ENCODE measurements at regions of chr7 and their contacts with region 1.

Region 1: DNA sequence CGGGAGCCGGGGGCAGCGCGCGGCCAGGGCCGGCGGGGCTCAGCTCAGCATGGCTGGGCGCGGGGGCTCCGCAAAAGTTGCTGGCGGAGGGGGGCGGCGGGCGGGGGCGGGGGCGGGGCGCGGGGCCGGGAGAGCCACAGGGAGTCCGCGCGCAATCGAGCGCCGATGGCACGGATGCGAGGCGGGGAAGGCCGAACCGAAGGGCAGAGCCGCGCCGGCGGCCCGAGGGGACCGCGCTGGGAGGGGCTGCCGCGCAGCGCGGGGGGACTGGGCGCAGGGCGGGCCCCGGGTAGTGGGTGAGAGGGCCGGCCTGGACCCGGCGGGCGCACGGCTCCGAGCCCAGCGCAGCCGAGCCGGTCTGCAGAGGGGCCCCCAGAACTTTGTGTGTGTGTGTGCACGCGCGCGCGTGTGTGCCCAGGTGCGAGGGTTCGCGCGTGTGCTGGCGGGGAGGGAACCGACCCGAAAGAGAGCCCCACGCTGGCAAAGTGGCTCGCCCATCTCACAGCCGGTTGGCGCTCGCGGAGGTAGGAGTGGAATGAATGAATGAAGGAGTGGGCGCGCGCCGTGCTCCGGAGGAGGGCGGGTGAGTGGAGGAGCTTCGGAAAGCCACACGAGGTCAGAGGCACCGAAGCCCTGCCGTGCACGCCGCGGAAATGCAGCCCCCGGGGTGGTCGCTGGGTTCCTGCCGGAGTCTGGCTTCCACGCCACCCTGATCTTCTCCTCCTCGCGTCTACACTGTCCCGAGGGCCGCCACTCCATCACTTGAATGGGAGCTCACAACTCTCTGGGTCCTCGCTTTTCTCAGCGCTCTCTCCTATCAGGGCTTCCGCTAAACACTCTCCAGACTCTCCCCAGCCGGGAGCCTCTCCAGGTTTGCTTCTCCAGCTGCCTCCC is at the start of gene HIPK2:
- DNase-seq: peak; percentile 71
- ATAC-seq: peak; percentile 81
- H3K4me3 Mint-ChIP-seq: peak within 1 kb of the TSS; percentile 99
- H3K27ac Mint-ChIP-seq: peak within 1 kb of the TSS; percentile 94
- H3K4me1 Mint-ChIP-seq: peaks cover 39% of the 10 kb centered on the region
- H3K27me3 Mint-ChIP-seq: peaks cover 3% of the 10 kb centered on the region
- CTCF ChIP-seq: no peak
- total RNA-seq, gene HIPK2: 21.1 and 23.0 TPM in 2 replicates

Region 2: DNA sequence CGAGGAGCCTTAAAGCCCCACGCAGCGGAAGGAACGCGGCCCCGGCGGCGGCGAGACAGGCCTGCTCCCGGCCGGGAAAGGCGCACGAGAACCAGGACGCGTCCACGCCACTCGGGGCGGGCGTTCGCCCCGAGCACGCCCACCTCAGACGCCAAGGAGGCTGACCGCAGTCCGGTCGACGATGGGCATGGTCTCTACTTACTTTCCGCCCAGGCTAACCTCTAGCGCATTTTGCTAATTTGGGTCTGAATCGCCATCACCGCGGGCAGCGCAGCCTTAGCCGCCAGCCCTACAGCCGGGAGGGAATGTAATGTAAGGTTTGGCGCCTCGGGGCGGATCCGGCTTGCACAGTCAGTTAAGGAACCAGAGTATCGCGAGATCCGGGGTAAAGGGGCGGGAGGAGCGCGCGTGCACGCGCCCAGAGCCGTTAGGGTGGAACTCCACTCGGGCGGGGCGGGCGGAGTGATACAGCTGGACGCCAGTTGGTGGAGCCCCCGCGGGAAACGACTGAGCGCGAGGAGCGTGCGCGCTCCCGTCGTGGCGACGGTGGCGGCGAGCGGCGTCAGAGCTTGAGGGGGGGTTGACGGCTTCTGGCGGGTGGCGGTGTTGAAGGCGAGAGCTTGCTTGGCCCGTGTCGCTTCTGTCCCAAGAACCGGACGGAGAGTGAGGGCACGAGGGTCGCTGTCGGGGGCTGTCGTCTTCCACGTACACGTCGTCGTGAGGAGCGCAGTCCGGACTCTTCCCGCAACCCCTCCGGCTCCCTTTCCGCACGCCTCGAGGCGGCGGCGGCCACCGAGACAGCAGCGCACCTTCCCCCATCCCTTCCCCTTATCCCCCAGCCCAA is 418.6 kb before region 1 on chr7 and contains the start of gene LUC7L2:
- CTCF ChIA-PET with region 1: no interaction called
- POLR2A ChIA-PET with region 1: no interaction called
- intact Hi-C with region 1: loop called (anchors 5 kb)
- DNase-seq: peak; percentile 97
- ATAC-seq: peak; percentile 78
- H3K4me3 Mint-ChIP-seq: peak within 1 kb of the TSS; percentile 98
- H3K27ac Mint-ChIP-seq: peak within 1 kb of the TSS; percentile 100
- H3K4me1 Mint-ChIP-seq: peaks cover 41% of the 10 kb centered on the region
- H3K27me3 Mint-ChIP-seq: no peaks in the 10 kb centered on the region
- CTCF ChIP-seq: no peak
- total RNA-seq, gene LUC7L2: 94.0 and 118 TPM in 2 replicates

Region 3: GRCh38 chr7:139811066-139811465 is 32.9 kb after region 1 on chr7:
- CTCF ChIA-PET with region 1: no interaction called
- POLR2A ChIA-PET with region 1: no interaction called
- intact Hi-C with region 1: no loop called
- DNase-seq: no peak
- ATAC-seq: no peak
- H3K4me3 Mint-ChIP-seq: no peak overlapping the region
- H3K27ac Mint-ChIP-seq: no peak overlapping the region
- H3K4me1 Mint-ChIP-seq: no peaks in the 10 kb centered on the region
- H3K27me3 Mint-ChIP-seq: peaks cover 7% of the 10 kb centered on the region
- CTCF ChIP-seq: no peak

Region 4: DNA sequence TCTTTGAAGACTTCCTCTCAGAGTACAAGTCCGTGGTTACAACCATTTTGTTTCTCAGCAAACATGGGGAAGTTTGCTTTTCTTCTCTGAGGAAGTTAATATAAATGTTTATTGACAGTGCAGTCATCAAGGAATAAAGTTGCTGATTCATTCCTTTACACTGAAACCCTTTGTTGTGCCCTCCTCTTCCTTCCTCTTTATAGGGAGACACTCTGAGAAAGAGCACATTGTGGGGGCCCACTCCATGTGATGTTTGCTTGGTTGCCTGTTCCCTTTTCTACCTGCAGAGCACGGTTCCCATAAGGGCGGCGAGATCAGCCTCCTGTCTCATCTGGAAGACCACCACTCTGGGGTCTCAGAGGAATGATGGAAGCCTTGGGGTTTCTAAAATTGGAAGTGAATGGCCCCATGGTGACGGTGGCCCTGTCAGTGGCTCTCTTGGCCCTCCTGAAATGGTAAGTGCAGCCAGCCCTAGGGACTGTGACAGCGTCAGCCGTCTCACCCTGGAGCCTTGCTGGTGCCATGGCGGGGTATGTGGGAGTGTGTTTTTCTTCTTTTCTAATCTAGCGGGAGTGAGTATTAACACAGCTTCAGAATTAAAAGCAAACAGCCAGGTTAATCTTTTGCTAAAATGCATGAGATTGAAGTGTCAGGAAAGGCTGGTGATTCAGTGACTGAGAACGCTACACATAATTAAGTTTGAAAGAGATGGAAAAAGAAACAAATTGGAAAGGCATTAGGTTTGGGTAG is 51.0 kb after region 1 on chr7 and contains the start of gene TBXAS1:
- CTCF ChIA-PET with region 1: no interaction called
- POLR2A ChIA-PET with region 1: interaction called, 4 read pairs
- intact Hi-C with region 1: loop called (anchors 2 kb)
- DNase-seq: no peak
- ATAC-seq: peak; percentile 73
- H3K4me3 Mint-ChIP-seq: peak within 1 kb of the TSS; percentile 74
- H3K27ac Mint-ChIP-seq: peak within 1 kb of the TSS; percentile 76
- H3K4me1 Mint-ChIP-seq: peaks cover 34% of the 10 kb centered on the region
- H3K27me3 Mint-ChIP-seq: no peaks in the 10 kb centered on the region
- CTCF ChIP-seq: no peak
- total RNA-seq, gene TBXAS1: 2.0 and 3.8 TPM in 2 replicates

Region 5: DNA sequence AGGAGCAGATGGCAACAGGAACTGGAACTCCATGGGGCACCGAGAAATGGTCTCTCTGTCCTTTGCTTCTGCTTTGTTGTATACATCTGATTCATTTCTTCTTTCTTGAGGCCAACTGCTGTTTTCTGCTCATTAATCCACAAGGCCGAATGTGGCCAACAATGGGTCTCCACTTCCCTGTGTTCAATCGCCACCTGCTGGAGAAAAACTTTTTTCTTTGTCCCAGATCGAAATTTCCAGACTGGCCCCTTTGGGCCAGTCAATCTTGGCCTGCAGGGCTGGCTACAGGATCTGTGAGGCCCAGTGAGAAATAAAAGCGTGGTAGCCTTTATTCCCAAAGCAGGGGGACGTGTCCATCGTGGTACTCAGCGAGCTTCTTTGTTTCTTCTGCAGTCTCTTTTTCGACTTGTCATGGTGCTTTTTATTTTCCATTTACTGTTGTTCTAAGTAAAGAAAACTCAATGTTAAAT is 225.8 kb after region 1 on chr7:
- CTCF ChIA-PET with region 1: interaction called, 3 read pairs
- POLR2A ChIA-PET with region 1: no interaction called
- intact Hi-C with region 1: loop called (anchors 1 kb)
- DNase-seq: no peak
- ATAC-seq: peak; percentile 49
- H3K4me3 Mint-ChIP-seq: no peak overlapping the region
- H3K27ac Mint-ChIP-seq: no peak overlapping the region
- H3K4me1 Mint-ChIP-seq: peaks cover 2% of the 10 kb centered on the region
- H3K27me3 Mint-ChIP-seq: no peaks in the 10 kb centered on the region
- CTCF ChIP-seq: no peak

Region 6: DNA sequence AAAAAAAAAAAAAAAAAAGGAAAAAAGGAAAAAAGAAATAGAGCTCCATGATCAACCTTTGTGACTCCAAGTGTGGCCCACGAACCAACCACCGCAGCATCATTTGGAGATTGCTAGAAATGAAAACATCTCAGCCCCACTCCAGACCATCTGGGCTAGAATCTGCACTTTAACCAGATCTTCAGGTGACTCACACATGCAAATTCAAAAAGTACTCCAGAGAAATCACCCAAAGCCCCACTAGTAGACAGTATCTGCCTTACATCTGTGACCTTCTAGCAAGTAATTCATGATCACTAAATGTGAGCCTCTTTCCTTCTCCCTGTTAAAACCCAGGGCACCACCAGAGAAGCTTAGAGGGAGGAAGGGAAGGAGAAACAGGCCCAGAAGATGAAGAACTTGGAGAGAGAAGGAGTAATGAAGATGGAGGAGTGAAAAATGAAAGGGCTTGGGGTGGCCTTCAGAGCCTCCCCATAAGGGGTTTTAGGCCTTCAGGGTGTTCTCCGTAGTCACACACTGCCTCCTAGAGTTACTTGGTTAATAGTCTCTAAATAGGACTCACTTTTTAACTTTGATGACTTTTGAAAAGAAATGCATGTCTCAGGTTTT is 526.1 kb after region 1 on chr7:
- CTCF ChIA-PET with region 1: no interaction called
- POLR2A ChIA-PET with region 1: no interaction called
- intact Hi-C with region 1: loop called (anchors 1 kb)
- DNase-seq: no peak
- ATAC-seq: peak; percentile 96
- H3K4me3 Mint-ChIP-seq: peak overlapping the region; percentile 39
- H3K27ac Mint-ChIP-seq: peak overlapping the region; percentile 90
- H3K4me1 Mint-ChIP-seq: peaks cover 5% of the 10 kb centered on the region
- H3K27me3 Mint-ChIP-seq: no peaks in the 10 kb centered on the region
- CTCF ChIP-seq: no peak

Region 7: GRCh38 chr7:140390466-140391190 is 612.4 kb after region 1 on chr7:
- CTCF ChIA-PET with region 1: no interaction called
- POLR2A ChIA-PET with region 1: no interaction called
- intact Hi-C with region 1: loop called (anchors 5 kb)
- DNase-seq: peak; percentile 32
- ATAC-seq: peak; percentile 88
- H3K4me3 Mint-ChIP-seq: no peak overlapping the region
- H3K27ac Mint-ChIP-seq: no peak overlapping the region
- H3K4me1 Mint-ChIP-seq: no peaks in the 10 kb centered on the region
- H3K27me3 Mint-ChIP-seq: no peaks in the 10 kb centered on the region
- CTCF ChIP-seq: no peak

Measured in activated B cell treated with CpG ODN at 0.5 μM for 24 hours (primary cell).